ENCODE measurements at regions of chr1 and their contacts with region 1.

Region 1: GRCh38 chr1:27605796-27606707 is 2.1 kb upstream of the AHDC1 start:
- DNase-seq: no peak
- H3K4me3 ChIP-seq: no peak overlapping the region
- H3K27ac ChIP-seq: peak overlapping the region; percentile 98
- H3K4me1 ChIP-seq: peaks cover 59% of the 10 kb centered on the region
- H3K27me3 ChIP-seq: no peaks in the 10 kb centered on the region
- CTCF ChIP-seq: peak; percentile 90

Region 2: DNA sequence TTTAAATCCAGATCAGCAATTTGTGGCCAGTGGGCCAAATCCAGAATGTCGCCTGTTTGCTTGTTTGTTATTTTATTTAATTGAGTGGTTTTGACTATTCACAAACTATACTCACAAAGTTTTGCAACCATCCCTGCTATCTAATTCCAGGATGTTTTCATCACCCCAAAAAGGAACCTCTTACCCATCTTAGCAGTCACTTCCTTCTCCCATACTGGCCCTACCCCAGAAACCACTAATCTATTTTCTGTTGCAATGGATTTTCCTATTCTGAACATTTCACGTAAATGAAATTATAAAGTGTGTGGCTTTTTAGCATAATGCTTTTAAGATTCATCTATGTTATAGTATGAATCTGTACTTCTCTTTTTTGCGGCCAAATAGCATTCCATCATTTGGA is 330.4 kb before region 1 on chr1:
- intact Hi-C with region 1: no loop called
- DNase-seq: no peak
- H3K4me3 ChIP-seq: no peak overlapping the region
- H3K27ac ChIP-seq: no peak overlapping the region
- H3K4me1 ChIP-seq: no peaks in the 10 kb centered on the region
- H3K27me3 ChIP-seq: no peaks in the 10 kb centered on the region
- CTCF ChIP-seq: no peak

Region 3: GRCh38 chr1:27300341-27301051 is 305.6 kb before region 1 on chr1:
- intact Hi-C with region 1: loop called (anchors 5 kb)
- DNase-seq: peak; percentile 80
- H3K4me3 ChIP-seq: no peak overlapping the region
- H3K27ac ChIP-seq: peak overlapping the region; percentile 88
- H3K4me1 ChIP-seq: peaks cover 43% of the 10 kb centered on the region
- H3K27me3 ChIP-seq: no peaks in the 10 kb centered on the region
- CTCF ChIP-seq: peak; percentile 100

Region 4: DNA sequence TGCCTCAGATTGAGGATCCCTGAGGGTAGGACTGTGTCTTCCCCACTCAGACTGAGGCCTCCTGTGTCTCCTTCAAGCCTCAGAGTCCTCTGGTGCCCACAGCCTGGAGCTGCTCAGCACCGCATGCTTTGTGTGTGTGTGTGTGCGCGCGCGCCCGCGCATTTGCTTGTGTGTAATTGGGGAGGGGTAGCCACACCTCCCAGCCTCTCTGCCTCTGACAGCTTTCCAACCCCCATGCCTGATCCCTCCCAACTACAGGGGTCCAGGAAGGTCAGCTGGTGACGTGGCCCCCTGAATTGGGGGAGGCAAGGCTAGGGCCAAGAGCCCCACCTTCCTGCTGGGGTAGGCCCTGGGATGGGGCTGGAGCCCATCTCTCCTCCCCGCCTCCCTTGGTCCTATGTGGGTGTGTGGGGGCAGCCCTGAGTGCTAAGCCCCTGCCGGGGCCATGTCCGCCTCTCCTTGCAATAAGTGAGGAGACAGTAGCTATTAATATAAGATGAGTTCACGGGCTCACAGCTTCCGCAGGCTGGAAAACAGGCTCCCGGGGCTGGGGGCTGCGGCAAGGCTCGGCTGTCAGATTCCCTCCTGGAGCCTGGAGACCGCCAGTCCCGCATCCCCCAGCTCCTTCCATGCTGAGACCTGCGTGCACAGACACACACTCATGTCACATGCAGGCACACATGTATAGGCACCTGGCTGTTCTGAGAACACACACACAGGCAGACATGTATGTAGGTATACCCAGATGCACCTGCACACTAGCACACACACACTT is 206.6 kb before region 1 on chr1:
- intact Hi-C with region 1: loop called (anchors 2 kb)
- DNase-seq: no peak
- H3K4me3 ChIP-seq: no peak overlapping the region
- H3K27ac ChIP-seq: peak overlapping the region; percentile 31
- H3K4me1 ChIP-seq: peaks cover 95% of the 10 kb centered on the region
- H3K27me3 ChIP-seq: no peaks in the 10 kb centered on the region
- CTCF ChIP-seq: no peak

Region 5: GRCh38 chr1:27536767-27537166 is 69.3 kb before region 1 on chr1:
- intact Hi-C with region 1: no loop called
- DNase-seq: peak; percentile 73
- H3K4me3 ChIP-seq: peak overlapping the region; percentile 17
- H3K27ac ChIP-seq: peak overlapping the region; percentile 89
- H3K4me1 ChIP-seq: peaks cover 70% of the 10 kb centered on the region
- H3K27me3 ChIP-seq: no peaks in the 10 kb centered on the region
- CTCF ChIP-seq: peak; percentile 19

Region 6: GRCh38 chr1:27662707-27663393 is 56.8 kb after region 1 on chr1:
- intact Hi-C with region 1: loop called (anchors 2 kb)
- DNase-seq: peak; percentile 80
- H3K4me3 ChIP-seq: no peak overlapping the region
- H3K27ac ChIP-seq: peak overlapping the region; percentile 79
- H3K4me1 ChIP-seq: peaks cover 62% of the 10 kb centered on the region
- H3K27me3 ChIP-seq: no peaks in the 10 kb centered on the region
- CTCF ChIP-seq: peak; percentile 90

Region 7: GRCh38 chr1:27858072-27858958 is 252.3 kb after region 1 on chr1:
- intact Hi-C with region 1: no loop called
- DNase-seq: peak; percentile 82
- H3K4me3 ChIP-seq: no peak overlapping the region
- H3K27ac ChIP-seq: no peak overlapping the region
- H3K4me1 ChIP-seq: peaks cover 15% of the 10 kb centered on the region
- H3K27me3 ChIP-seq: no peaks in the 10 kb centered on the region
- CTCF ChIP-seq: peak; percentile 89